Stomach (tissue), 19 donors: ENCODE measurements at regions of chr17 and their contacts with region 1.

Region 1: GRCh38 chr17:34542700-34543336 is 36.6 kb upstream of the TMEM132E start:
- DNase-seq: peak; percentile 27 to 33
- H3K4me3 ChIP-seq: no peak overlapping the region
- H3K27ac ChIP-seq: no peak overlapping the region
- H3K4me1 ChIP-seq: no peaks in the 10 kb centered on the region
- H3K27me3 ChIP-seq: peaks cover 0 to 76% (median 14%) of the 10 kb centered on the region in 3 donors
- CTCF ChIP-seq: peak in 5 of 7 experiments; percentile 35 to 74 (median 60)
- EP300 ChIP-seq: no peak
- POLR2A ChIP-seq: no peak

Region 2: GRCh38 chr17:35119368-35120165 is 576.7 kb after region 1 on chr17 and contains the start of gene RAD51D:
- intact Hi-C with region 1: loop called (anchors 10 kb)
- DNase-seq: peak; percentile 81 to 94
- H3K4me3 ChIP-seq: peak within 1 kb of the TSS; percentile 72 to 88 (median 77)
- H3K27ac ChIP-seq: peak within 1 kb of the TSS; percentile 20 to 86 (median 77)
- H3K4me1 ChIP-seq: peaks cover 16 to 29% (median 25%) of the 10 kb centered on the region in 4 donors
- H3K27me3 ChIP-seq: no peaks in the 10 kb centered on the region
- CTCF ChIP-seq: peak in 5 of 7 experiments; percentile 70 to 99 (median 96)
- EP300 ChIP-seq: no peak
- POLR2A ChIP-seq: no peak
- total RNA-seq, gene RAD51D: 2.2 to 31.5 (median 3.5) TPM